AG04449 (cell line): ENCODE measurements at regions of chr1 and their contacts with region 1.

Region 1: DNA sequence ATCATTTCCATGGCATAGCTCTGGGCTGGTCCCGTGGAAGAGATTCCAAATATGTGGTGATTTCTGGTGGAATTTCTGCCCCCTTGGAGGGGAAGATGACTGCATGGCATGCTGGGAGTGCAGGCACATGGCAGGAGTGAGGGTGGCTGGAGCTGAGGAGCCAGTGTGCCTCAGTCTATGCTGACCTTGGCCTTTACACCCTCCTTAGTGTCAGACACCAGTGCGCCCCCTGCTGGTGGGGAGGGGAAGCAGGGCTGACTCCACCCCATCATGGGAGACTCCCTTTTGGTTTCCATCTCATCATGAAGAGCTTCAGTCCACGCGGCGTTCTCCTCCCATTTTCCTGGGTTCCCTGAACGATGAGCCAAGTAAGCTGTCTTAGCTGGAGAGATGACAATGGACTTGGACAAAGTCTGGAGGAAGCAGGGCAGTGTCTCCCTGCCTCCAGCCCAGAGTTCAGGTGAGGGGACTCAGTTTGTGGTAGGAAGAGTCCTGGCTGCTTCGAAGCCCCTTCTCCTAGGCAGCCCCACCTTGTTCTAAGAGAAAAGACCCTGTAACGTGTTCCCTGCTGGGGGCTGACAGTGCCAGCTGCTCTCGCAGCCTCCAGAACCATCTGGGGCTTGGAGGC is 10.3 kb downstream of the ALX3 start:
- DNase-seq: no peak
- H3K4me3 ChIP-seq: no peak overlapping the region
- CTCF ChIP-seq: peak; percentile 80

Region 2: GRCh38 chr1:110070282-110070669 is 10.1 kb after region 1 on chr1:
- CTCF ChIA-PET with region 1: interaction called, 39 read pairs
- POLR2A ChIA-PET with region 1: interaction called, 4 read pairs
- DNase-seq: no peak
- H3K4me3 ChIP-seq: no peak overlapping the region
- CTCF ChIP-seq: no peak

Region 3: GRCh38 chr1:110076789-110077500 is 16.8 kb after region 1 on chr1:
- CTCF ChIA-PET with region 1: interaction called, 935 read pairs
- POLR2A ChIA-PET with region 1: no interaction called
- DNase-seq: no peak
- H3K4me3 ChIP-seq: no peak overlapping the region
- CTCF ChIP-seq: no peak